ENCODE measurements at regions of chr11 and their contacts with region 1.

Region 1: GRCh38 chr11:116499396-116500003 is 273.3 kb downstream of the BUD13 start:
- DNase-seq: peak; percentile 72 to 84 (median 80)
- ATAC-seq: peak; percentile 98
- H3K4me3 ChIP-seq: no peak overlapping the region
- H3K27ac ChIP-seq: no peak overlapping the region
- H3K4me1 ChIP-seq: no peaks in the 10 kb centered on the region; a peak in 3 of 5 replicates
- H3K27me3 ChIP-seq: peaks cover 12 to 44% of the 10 kb centered on the region in 2 experiments
- CTCF ChIP-seq: peak; percentile 72 to 76 (median 73)
- EP300 ChIP-seq: no peak
- POLR2A ChIP-seq: no peak
- RAD21 ChIP-seq: peak; percentile 60 to 76

Region 2: GRCh38 chr11:115324581-115325432 is 1174.7 kb before region 1 on chr11:
- CTCF ChIA-PET with region 1: interaction called, 5 read pairs
- POLR2A ChIA-PET with region 1: no interaction called
- in situ Hi-C with region 1: no loop called
- intact Hi-C with region 1: loop called (anchors 10 kb)
- DNase-seq: peak; percentile 34 to 49 (median 44)
- ATAC-seq: peak; percentile 92
- H3K4me3 ChIP-seq: no peak overlapping the region
- H3K27ac ChIP-seq: no peak overlapping the region
- H3K4me1 ChIP-seq: no peaks in the 10 kb centered on the region
- H3K27me3 ChIP-seq: no peaks in the 10 kb centered on the region
- CTCF ChIP-seq: peak; percentile 65 to 85 (median 70)
- EP300 ChIP-seq: no peak
- POLR2A ChIP-seq: no peak
- RAD21 ChIP-seq: peak; percentile 72 to 74

Region 3: GRCh38 chr11:116257104-116257503 is 242.4 kb before region 1 on chr11:
- CTCF ChIA-PET with region 1: no interaction called
- POLR2A ChIA-PET with region 1: no interaction called
- in situ Hi-C with region 1: no loop called
- intact Hi-C with region 1: no loop called
- DNase-seq: peak in 1 of 4 experiments; percentile 16
- ATAC-seq: peak; percentile 88
- H3K4me3 ChIP-seq: no peak overlapping the region
- H3K27ac ChIP-seq: no peak overlapping the region
- H3K4me1 ChIP-seq: no peaks in the 10 kb centered on the region
- H3K27me3 ChIP-seq: peaks cover 0 to 5% of the 10 kb centered on the region in 2 experiments; a peak in 1 of 5 replicates
- CTCF ChIP-seq: no peak
- EP300 ChIP-seq: no peak
- POLR2A ChIP-seq: no peak
- RAD21 ChIP-seq: no peak

Region 4: GRCh38 chr11:116357784-116358544 is 141.5 kb before region 1 on chr11:
- CTCF ChIA-PET with region 1: interaction called, 3 read pairs
- POLR2A ChIA-PET with region 1: no interaction called
- in situ Hi-C with region 1: no loop called
- intact Hi-C with region 1: loop called (anchors 2 kb)
- DNase-seq: peak; percentile 68 to 87 (median 80)
- ATAC-seq: peak; percentile 100
- H3K4me3 ChIP-seq: no peak overlapping the region
- H3K27ac ChIP-seq: no peak overlapping the region
- H3K4me1 ChIP-seq: peaks cover 0 to 6% of the 10 kb centered on the region in 2 experiments; a peak in 1 of 5 replicates
- H3K27me3 ChIP-seq: peaks cover 0 to 46% of the 10 kb centered on the region in 2 experiments; a peak in 4 of 5 replicates
- CTCF ChIP-seq: peak; percentile 84 to 95 (median 92)
- EP300 ChIP-seq: no peak
- POLR2A ChIP-seq: no peak
- RAD21 ChIP-seq: peak; percentile 54 to 67; a peak in 3 of 4 replicates

Region 5: GRCh38 chr11:116427903-116428637 is 71.4 kb before region 1 on chr11:
- CTCF ChIA-PET with region 1: no interaction called
- POLR2A ChIA-PET with region 1: no interaction called
- in situ Hi-C with region 1: no loop called
- intact Hi-C with region 1: no loop called
- DNase-seq: no peak
- ATAC-seq: no peak
- H3K4me3 ChIP-seq: no peak overlapping the region
- H3K27ac ChIP-seq: no peak overlapping the region
- H3K4me1 ChIP-seq: no peaks in the 10 kb centered on the region
- H3K27me3 ChIP-seq: peaks cover 2 to 25% of the 10 kb centered on the region in 2 experiments; a peak in 3 of 5 replicates
- CTCF ChIP-seq: no peak
- EP300 ChIP-seq: no peak
- POLR2A ChIP-seq: no peak
- RAD21 ChIP-seq: no peak

Region 6: DNA sequence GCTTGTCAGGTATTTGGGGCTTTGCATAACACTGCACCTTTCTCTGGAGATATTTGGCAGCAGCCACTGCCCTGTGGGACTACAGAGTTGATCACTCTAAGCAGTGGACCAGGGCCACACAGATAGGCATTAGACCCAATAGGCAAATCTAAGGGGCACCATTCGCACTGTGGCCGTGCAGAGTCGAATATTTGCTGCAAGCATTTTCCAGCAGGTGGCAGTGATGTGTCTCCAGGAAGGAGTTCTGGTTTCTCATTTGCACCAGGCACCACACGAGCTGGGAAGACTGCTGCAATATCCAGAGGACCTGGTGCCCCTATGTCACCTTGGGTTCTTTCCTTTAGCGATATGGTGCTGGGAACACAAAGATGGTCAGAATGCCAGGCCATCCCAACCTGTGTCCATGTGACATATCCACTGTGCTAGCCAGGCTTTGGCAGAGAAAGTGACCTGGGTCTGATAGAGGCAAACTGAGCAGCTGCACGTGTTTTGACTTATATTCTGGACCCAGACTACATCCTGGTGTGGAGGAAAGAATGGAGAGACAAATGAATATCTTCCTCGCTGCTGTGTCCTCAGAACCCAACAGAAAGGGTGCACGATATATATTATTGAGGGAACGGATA is 45.4 kb before region 1 on chr11:
- CTCF ChIA-PET with region 1: no interaction called
- POLR2A ChIA-PET with region 1: no interaction called
- in situ Hi-C with region 1: no loop called
- intact Hi-C with region 1: loop called (anchors 2 kb)
- DNase-seq: peak; percentile 14 to 55 (median 23)
- ATAC-seq: peak; percentile 80
- H3K4me3 ChIP-seq: no peak overlapping the region
- H3K27ac ChIP-seq: no peak overlapping the region
- H3K4me1 ChIP-seq: no peaks in the 10 kb centered on the region
- H3K27me3 ChIP-seq: peaks cover 7 to 11% of the 10 kb centered on the region in 2 experiments; a peak in 3 of 5 replicates
- CTCF ChIP-seq: peak; percentile 58 to 72 (median 63)
- EP300 ChIP-seq: no peak
- POLR2A ChIP-seq: no peak
- RAD21 ChIP-seq: peak in 1 of 2 experiments; percentile 56; a peak in 2 of 4 replicates

Region 7: GRCh38 chr11:117232092-117232878 is 732.8 kb after region 1 on chr11 and contains the start of gene RNF214:
- CTCF ChIA-PET with region 1: no interaction called
- POLR2A ChIA-PET with region 1: no interaction called
- in situ Hi-C with region 1: loop called (anchors 25 kb)
- intact Hi-C with region 1: no loop called
- DNase-seq: peak; percentile 84 to 96 (median 96)
- ATAC-seq: peak; percentile 90
- H3K4me3 ChIP-seq: peak within 1 kb of the TSS; percentile 85
- H3K27ac ChIP-seq: peak within 1 kb of the TSS; percentile 94
- H3K4me1 ChIP-seq: peaks cover 11 to 18% of the 10 kb centered on the region in 2 experiments; a peak in 3 of 5 replicates
- H3K27me3 ChIP-seq: no peaks in the 10 kb centered on the region
- CTCF ChIP-seq: peak; percentile 81 to 83 (median 82)
- EP300 ChIP-seq: peak; percentile 29; the same call in 1 of the 2 replicates
- POLR2A ChIP-seq: peak; percentile 83
- RAD21 ChIP-seq: peak; percentile 48 to 51; a peak in 2 of 4 replicates
- polyA plus RNA-seq, gene RNF214: 6.6 to 7.4 TPM

Measured in K562 (cell line).